Naive thymus-derived CD4-positive, alpha-beta T cell (primary cell): ENCODE measurements at regions of chr5 and their contacts with region 1.

Region 1: GRCh38 chr5:180744253-180744652 is 4.4 kb upstream of the OR2Y1 start:
- DNase-seq: no peak
- ATAC-seq: no peak
- H3K4me3 ChIP-seq: no peak overlapping the region
- H3K4me3 Mint-ChIP-seq: no peak overlapping the region
- H3K27ac ChIP-seq: no peak overlapping the region
- H3K27ac Mint-ChIP-seq: no peak overlapping the region
- H3K4me1 ChIP-seq: no peaks in the 10 kb centered on the region
- H3K4me1 Mint-ChIP-seq: peaks cover 0 to 4% (median 0%) of the 10 kb centered on the region in 7 donors
- H3K27me3 ChIP-seq: peaks cover 0 to 3% of the 10 kb centered on the region in 2 donors
- H3K27me3 Mint-ChIP-seq: peaks cover 7 to 17% (median 13%) of the 10 kb centered on the region in 5 donors

Region 2: DNA sequence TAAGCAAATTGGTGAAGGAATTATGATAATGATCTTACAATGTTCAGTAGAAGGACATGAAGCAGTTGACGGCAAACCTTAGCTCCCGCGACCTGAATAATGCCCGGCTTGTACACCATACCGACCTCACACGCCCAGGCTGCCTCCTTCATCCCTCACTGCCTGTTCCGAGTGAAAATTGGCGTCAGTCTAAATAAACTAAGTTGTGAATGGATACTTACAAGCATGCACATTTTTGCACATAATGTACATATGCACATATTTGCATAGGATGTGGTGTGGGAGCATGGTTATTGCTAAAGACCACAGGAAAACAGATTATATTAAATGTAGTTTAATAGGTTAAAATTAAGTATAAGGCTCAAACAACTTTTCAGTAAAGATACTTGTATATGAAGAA is 19.3 kb before region 1 on chr5:
- CTCF ChIA-PET with region 1: no interaction called
- POLR2A ChIA-PET with region 1: no interaction called
- intact Hi-C with region 1: no loop called
- DNase-seq: no peak
- ATAC-seq: no peak
- H3K4me3 ChIP-seq: no peak overlapping the region
- H3K4me3 Mint-ChIP-seq: no peak overlapping the region
- H3K27ac ChIP-seq: no peak overlapping the region
- H3K27ac Mint-ChIP-seq: no peak overlapping the region
- H3K4me1 ChIP-seq: peaks cover 0 to 6% of the 10 kb centered on the region in 2 donors
- H3K4me1 Mint-ChIP-seq: peaks cover 1 to 17% (median 13%) of the 10 kb centered on the region in 7 donors
- H3K27me3 ChIP-seq: no peaks in the 10 kb centered on the region
- H3K27me3 Mint-ChIP-seq: peaks cover 0 to 25% (median 17%) of the 10 kb centered on the region in 5 donors

Region 3: DNA sequence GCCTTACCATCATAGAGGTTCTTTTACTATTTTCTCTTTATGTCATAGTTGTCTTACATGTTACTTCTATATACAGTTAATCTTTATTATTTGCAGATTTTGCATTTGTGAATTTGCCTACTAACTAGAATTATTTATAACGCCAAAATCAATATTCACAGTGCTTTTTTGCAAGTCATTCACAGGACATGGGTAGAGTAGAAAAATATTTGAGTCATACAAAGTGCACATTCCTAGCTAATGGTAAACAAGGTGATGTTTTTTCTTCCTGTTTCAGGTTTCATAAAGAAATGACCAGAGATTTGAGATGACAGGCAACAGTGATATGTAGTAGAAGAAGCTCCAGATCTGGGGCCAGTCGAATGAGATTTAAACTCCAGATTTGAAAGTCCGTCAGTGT is 25.6 kb after region 1 on chr5:
- CTCF ChIA-PET with region 1: no interaction called
- POLR2A ChIA-PET with region 1: no interaction called
- intact Hi-C with region 1: loop called in 1 of 2 experiments (anchors 1 kb)
- DNase-seq: no peak
- ATAC-seq: no peak
- H3K4me3 ChIP-seq: no peak overlapping the region
- H3K4me3 Mint-ChIP-seq: no peak overlapping the region
- H3K27ac ChIP-seq: no peak overlapping the region
- H3K27ac Mint-ChIP-seq: no peak overlapping the region
- H3K4me1 ChIP-seq: no peaks in the 10 kb centered on the region
- H3K4me1 Mint-ChIP-seq: no peaks in the 10 kb centered on the region
- H3K27me3 ChIP-seq: peaks cover 0 to 3% of the 10 kb centered on the region in 2 donors
- H3K27me3 Mint-ChIP-seq: peaks cover 17 to 37% (median 25%) of the 10 kb centered on the region in 5 donors

Region 4: DNA sequence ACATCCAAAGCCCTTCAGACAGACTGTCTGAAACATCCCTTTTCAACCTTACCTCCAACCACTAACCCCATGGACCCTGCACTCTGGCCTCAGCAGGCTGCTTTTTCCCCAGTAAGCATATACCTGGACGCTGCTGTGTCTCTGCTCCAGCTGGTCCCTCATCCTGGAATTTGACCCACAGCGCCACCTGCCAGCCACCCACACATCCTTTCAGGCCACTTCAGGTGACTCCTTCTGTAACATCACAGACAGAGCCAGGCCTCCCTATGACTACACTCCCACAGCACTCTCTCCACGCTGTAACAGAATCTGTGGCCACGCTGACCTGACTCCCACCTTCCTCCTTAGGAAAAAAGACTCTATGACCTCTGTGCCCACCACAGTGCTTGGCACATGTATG is 54.9 kb after region 1 on chr5:
- CTCF ChIA-PET with region 1: no interaction called
- POLR2A ChIA-PET with region 1: no interaction called
- intact Hi-C with region 1: no loop called
- DNase-seq: no peak
- ATAC-seq: no peak
- H3K4me3 ChIP-seq: no peak overlapping the region
- H3K4me3 Mint-ChIP-seq: peak overlapping the region; percentile 69 to 98 (median 90)
- H3K27ac ChIP-seq: peak overlapping the region; percentile 58
- H3K27ac Mint-ChIP-seq: peak overlapping the region; percentile 1 to 90 (median 81)
- H3K4me1 ChIP-seq: peaks cover 73 to 74% of the 10 kb centered on the region in 2 donors
- H3K4me1 Mint-ChIP-seq: peaks cover 72 to 81% (median 76%) of the 10 kb centered on the region in 7 donors
- H3K27me3 ChIP-seq: no peaks in the 10 kb centered on the region
- H3K27me3 Mint-ChIP-seq: no peaks in the 10 kb centered on the region